ENCODE measurements at regions of chr17 and their contacts with region 1.

Region 1: DNA sequence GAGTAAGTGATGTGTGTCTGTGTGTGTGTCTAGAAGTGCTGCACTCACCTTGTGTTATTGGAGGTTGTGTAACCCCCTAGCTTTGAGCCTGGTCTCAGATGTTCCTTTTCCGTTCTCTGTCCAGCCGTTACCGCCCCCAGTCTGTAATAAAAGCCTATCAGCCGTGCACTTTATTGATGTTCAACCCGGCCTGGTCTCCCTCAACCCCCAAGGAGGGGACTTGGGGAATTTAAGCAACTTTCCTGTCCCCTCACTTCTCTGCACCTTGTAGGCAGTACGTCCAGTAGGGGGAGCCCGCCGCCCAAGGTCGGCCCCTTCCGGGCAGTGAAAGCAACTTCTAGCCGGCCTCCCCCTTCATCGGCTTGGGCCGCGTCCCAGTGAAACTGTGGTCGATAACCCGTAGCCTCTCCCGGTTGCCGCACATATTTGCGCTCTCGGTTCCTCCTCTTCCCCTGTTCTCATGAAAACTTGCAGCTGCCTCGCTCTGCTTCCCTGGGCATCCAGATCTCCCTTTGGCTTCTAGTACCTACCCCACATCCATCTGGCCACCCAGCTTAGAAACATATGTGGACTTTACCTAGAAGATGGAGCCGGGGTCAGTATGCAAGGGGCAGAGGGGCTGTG is 7.9 kb downstream of the PNPO start:
- DNase-seq: peak; percentile 82 to 90 (median 87)
- ATAC-seq: peak; percentile 95
- H3K4me3 ChIP-seq: no peak overlapping the region
- H3K27ac ChIP-seq: peak overlapping the region; percentile 8; the same call in 1 of the 3 replicates
- H3K4me1 ChIP-seq: peaks cover 9% of the 10 kb centered on the region in 2 experiments; a peak in 3 of 5 replicates
- H3K27me3 ChIP-seq: no peaks in the 10 kb centered on the region
- CTCF ChIP-seq: peak; percentile 95 to 97 (median 96)
- EP300 ChIP-seq: no peak; the same call in 1 of the 2 replicates
- POLR2A ChIP-seq: no peak
- RAD21 ChIP-seq: peak; percentile 87 to 90

Region 2: DNA sequence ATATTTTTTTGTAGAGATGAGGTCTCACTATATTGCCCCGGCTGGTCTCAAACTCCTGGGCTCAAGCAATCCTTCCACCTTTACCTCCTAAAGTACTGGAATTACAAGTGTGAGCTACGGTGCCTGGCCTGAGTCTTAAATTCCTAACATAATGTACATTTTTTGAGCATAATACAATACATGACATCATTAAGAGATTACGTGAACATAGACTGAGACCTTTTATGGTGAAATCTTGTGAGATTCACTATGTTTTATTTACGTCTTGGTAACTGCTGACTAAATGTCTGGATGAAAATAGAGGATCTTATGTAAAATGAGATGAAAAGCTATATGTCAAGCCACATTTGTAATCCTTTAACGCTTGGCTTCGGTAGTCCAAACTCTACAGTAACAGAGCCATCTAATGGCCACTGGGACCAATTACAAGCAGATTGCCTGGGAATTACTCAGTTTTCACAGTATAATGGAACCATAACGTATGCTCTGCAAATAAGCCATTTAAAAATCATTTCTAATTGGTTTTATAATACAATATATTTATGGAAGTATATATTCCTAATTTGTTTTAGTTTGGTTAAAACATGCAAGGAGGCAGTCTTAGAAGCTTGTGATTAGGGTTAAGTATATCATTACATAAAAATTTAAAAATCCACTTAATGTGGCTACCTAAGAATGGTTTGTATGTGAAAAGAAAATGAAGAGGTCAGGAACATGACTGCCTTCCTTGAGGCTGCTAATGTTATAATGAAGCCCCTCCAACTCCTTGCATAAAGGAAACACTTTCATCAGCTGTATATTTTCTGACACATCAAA is 633.6 kb before region 1 on chr17:
- CTCF ChIA-PET with region 1: no interaction called
- POLR2A ChIA-PET with region 1: no interaction called
- in situ Hi-C with region 1: no loop called
- intact Hi-C with region 1: no loop called
- DNase-seq: peak; percentile 55 to 80 (median 68)
- ATAC-seq: peak; percentile 94
- H3K4me3 ChIP-seq: no peak overlapping the region
- H3K27ac ChIP-seq: no peak overlapping the region
- H3K4me1 ChIP-seq: peaks cover 3 to 6% of the 10 kb centered on the region in 2 experiments; a peak in 2 of 5 replicates
- H3K27me3 ChIP-seq: no peaks in the 10 kb centered on the region
- CTCF ChIP-seq: peak; percentile 75 to 93 (median 81)
- EP300 ChIP-seq: no peak; the same call in 1 of the 2 replicates
- POLR2A ChIP-seq: no peak
- RAD21 ChIP-seq: peak; percentile 99 to 100

Region 3: GRCh38 chr17:47959825-47960655 is 10.8 kb after region 1 on chr17:
- CTCF ChIA-PET with region 1: no interaction called
- POLR2A ChIA-PET with region 1: interaction called, 14 read pairs
- in situ Hi-C with region 1: no loop called
- intact Hi-C with region 1: no loop called
- DNase-seq: no peak
- ATAC-seq: peak; percentile 31; the same call in 1 of the 3 replicates
- H3K4me3 ChIP-seq: no peak overlapping the region
- H3K27ac ChIP-seq: no peak overlapping the region
- H3K4me1 ChIP-seq: peaks cover 10 to 19% of the 10 kb centered on the region in 2 experiments
- H3K27me3 ChIP-seq: no peaks in the 10 kb centered on the region; a peak in 1 of 5 replicates
- CTCF ChIP-seq: no peak
- EP300 ChIP-seq: no peak
- POLR2A ChIP-seq: no peak
- RAD21 ChIP-seq: no peak

Region 4: GRCh38 chr17:47970704-47971463 is 21.6 kb after region 1 on chr17 and contains the start of gene CDK5RAP3:
- CTCF ChIA-PET with region 1: interaction called, 6 read pairs
- POLR2A ChIA-PET with region 1: interaction called, 6 read pairs
- in situ Hi-C with region 1: no loop called
- intact Hi-C with region 1: loop called (anchors 1 kb)
- DNase-seq: peak; percentile 97 to 100 (median 98)
- ATAC-seq: peak; percentile 99
- H3K4me3 ChIP-seq: peak within 1 kb of the TSS; percentile 54
- H3K27ac ChIP-seq: peak within 1 kb of the TSS; percentile 84
- H3K4me1 ChIP-seq: peaks cover 20 to 31% of the 10 kb centered on the region in 2 experiments; a peak in 4 of 5 replicates
- H3K27me3 ChIP-seq: no peaks in the 10 kb centered on the region
- CTCF ChIP-seq: peak; percentile 98 to 99 (median 98)
- EP300 ChIP-seq: no peak
- POLR2A ChIP-seq: peak; percentile 93
- RAD21 ChIP-seq: peak; percentile 73 to 76
- polyA plus RNA-seq, gene CDK5RAP3: 44.2 to 73.0 TPM

Region 5: DNA sequence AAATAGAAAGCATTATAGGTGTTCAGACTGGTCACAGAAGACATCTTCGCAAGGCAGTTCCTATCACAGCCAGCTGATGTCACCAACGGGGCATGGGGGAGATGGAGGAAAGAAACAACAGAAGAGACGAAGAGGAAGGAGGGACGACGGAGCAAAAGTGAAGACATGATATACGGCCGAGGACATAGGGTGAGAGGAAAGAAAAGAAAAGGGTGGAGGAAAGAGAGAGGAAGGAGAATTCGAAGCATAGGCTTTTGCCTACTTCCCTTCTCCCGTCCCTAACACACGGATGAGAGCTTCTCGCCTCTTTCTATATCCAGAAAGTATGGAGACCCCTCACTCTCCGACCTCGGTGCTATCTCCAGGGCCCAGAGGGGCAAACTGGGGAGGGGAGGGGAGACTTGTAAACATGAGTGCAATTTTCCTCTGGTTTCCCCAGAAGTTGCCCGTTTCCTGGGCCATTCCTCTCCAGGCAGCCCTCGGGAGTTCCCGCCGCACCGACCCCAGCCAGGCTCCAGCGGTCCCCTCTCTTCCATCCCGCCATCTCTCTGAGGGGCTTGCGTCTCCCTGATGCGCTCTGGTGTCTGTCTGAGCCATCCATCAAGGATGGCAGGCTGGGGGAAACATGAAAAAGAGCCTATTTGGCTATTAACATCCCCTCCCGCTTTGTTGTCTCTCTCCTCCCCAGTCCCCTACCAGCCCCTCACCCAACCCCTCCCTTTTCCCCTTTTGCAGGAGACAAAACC is 62.3 kb after region 1 on chr17:
- CTCF ChIA-PET with region 1: interaction called, 29 read pairs
- POLR2A ChIA-PET with region 1: interaction called, 3 read pairs
- in situ Hi-C with region 1: loop called (anchors 5 kb)
- intact Hi-C with region 1: no loop called
- DNase-seq: peak; percentile 57 to 81 (median 68)
- ATAC-seq: peak; percentile 88
- H3K4me3 ChIP-seq: peak overlapping the region; percentile 12; the same call in 1 of the 2 replicates
- H3K27ac ChIP-seq: 0 out of 3 replicates have a peak overlapping the region, but pooled peaks have one; percentile 21
- H3K4me1 ChIP-seq: peaks cover 22 to 23% of the 10 kb centered on the region in 2 experiments
- H3K27me3 ChIP-seq: no peaks in the 10 kb centered on the region
- CTCF ChIP-seq: peak; percentile 71 to 77 (median 72)
- EP300 ChIP-seq: no peak
- POLR2A ChIP-seq: no peak
- RAD21 ChIP-seq: peak; percentile 34 to 67

Measured in K562 (cell line).